Posterior vena cava (tissue), 2 donors: ENCODE measurements at regions of chr15 and their contacts with region 1.

Region 1: GRCh38 chr15:88904624-88905327 is 8.4 kb downstream of the MFGE8 start:
- DNase-seq: peak; percentile 96

Region 2: DNA sequence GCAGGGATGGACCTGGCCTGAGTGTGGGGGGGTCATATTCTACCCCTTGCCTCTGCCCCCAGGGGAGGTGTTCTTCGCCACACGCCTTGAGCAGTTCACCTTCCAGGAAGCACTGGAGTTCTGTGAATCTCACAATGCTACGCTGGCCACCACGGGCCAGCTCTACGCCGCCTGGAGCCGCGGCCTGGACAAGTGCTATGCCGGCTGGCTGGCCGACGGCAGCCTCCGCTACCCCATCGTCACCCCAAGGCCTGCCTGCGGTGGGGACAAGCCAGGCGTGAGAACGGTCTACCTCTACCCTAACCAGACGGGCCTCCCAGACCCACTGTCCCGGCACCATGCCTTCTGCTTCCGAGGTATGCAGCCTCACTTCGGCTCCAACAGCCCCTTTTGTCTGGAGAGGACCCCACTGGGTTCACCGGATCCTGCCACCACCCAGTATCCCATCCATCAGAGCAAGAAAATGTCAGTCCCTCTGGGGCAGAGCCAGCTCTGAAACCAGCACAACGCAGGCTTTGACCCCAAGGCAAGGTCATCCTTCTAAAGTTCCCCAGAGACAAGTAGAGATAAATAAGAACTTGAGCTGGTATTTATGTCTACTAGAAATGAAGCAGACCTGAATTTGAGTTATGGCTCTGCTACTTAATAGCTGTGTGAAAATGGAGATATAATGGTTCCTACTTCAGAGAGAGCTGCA is 55.3 kb before region 1 on chr15:
- intact Hi-C with region 1: no loop called
- DNase-seq: no peak

Region 3: GRCh38 chr15:88930579-88930978 is 25.8 kb after region 1 on chr15:
- intact Hi-C with region 1: no loop called
- DNase-seq: no peak

Region 4: DNA sequence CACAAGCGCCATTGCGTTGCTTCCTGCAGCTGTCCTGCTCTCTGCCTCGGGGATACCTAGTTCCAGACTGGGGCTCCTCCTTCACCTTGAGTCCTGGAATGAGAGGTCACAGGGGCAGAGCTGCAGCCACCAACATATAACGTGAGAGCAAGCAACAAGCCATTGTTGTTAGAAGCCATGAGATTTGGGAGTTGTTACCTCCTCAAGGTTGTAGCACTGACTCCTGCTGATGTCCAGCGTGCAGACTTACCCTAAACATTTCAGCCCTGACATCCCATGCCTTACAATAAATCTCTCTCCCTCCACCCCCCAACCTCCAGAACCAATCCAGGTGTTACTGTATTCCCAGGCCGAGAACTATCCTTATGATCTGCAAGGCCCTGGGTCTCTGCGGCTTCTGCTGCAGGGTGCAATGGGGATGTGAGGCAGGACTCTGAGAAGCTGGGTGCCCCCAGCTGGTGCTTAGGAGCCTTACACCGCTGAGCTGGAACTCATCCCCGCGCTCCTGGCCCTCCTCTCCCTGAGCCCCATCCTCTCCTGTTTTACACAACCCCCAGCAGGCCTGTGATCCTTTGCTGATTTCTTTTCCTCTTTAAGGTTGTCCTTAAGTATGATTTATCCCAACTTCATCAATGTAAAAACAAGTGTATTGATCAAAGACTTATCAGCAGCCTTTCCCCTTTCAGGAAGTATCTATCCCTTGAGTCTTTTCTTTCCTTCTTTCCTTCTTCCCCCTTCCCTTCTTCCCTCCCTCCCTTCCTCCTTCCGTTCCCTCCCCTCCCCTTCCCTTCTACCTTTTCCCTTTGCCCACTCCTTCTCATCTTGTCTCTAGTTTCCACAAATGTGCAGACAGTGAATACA is 99.3 kb after region 1 on chr15:
- intact Hi-C with region 1: loop called (anchors 5 kb)
- DNase-seq: no peak

Region 5: DNA sequence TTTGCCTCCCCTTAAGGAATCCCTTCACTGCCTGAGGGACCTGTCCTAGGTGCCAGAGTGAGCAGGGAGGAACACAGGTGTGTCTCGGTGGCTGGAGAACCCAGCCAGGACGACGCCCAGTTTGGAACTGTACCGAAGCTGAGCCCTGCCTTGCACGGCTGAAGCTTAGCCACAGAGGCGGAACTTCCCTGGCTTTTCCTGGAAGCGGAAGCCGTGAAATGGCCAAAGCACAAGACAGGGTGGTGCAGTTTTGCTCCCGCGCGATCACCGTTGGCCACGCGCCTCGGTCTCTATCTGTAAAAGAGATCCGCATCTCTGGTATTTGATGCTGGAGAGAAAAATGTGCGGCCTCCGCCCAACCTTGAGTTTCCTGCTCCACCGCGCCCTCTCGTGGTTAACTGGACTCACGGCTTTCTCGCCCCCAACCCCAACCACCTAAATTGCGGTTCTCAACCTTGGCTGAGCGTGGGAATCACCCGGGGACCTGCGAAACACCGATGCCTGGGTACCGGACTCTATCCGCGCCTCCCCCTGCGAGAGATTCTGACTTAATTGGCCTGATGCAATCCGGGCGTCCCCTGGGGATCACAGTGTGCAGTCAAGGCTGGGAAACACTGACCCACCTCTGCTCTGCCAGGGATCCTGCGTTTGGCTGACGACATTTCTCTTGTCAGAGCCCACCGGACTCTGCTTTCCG is 112.7 kb after region 1 on chr15:
- intact Hi-C with region 1: loop called in 1 of 2 experiments (anchors 5 kb)
- DNase-seq: peak; percentile 96

Region 6: GRCh38 chr15:89177633-89178306 is 273.0 kb after region 1 on chr15:
- intact Hi-C with region 1: loop called in 1 of 2 experiments (anchors 5 kb)
- DNase-seq: no peak